HEK293T (cell line): ENCODE measurements at regions of chr11 and their contacts with region 1.

Region 1: DNA sequence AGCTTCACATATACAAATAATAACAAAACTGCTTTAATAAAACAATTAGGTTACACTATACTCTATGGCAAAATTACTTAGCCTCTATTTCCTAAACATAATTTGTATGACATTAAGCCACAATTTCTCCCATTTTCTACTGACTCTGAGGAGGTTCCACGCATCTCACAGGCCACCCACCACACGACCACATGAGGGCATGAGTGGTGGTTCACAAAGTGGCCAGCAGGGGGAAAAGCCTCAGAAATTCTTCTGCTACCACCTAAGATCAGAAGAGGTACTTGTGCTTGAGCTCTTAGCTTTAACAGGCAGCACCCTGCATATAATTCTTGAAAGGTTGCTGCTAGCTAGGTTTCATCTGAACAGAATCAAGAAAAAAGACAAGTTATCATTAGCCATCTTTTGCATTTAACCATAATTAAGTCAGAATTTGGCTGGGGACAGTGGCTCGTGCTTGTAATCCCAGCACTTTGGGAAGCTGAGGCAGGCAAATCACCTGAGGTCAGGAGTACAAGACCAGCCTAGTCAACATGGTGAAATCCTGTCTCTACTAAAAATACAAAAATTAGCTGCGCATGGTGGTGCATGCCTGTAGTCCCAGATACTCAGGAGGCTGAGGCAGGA is 7.7 kb downstream of the LPXN start:
- DNase-seq: peak; percentile 58

Region 2: GRCh38 chr11:58578635-58579191 is 10.7 kb after region 1 on chr11 and contains the start of gene ZFP91:
- CTCF ChIA-PET with region 1: no interaction called
- POLR2A ChIA-PET with region 1: interaction called, 17 read pairs
- DNase-seq: peak; percentile 81

Region 3: GRCh38 chr11:58629857-58630256 is 61.9 kb after region 1 on chr11:
- CTCF ChIA-PET with region 1: interaction called, 10 read pairs
- POLR2A ChIA-PET with region 1: no interaction called
- DNase-seq: peak; percentile 34